ENCODE measurements at regions of chr18 and their contacts with region 1.

Region 1: GRCh38 chr18:42114310-42114943 is 159.4 kb downstream of the PIK3C3 start:
- DNase-seq: peak; percentile 42
- ATAC-seq: peak; percentile 96
- H3K4me3 ChIP-seq: no peak overlapping the region
- H3K27ac ChIP-seq: no peak overlapping the region; the same call in 1 of the 2 replicates
- H3K4me1 ChIP-seq: peaks cover 11% of the 10 kb centered on the region
- H3K27me3 ChIP-seq: no peaks in the 10 kb centered on the region
- CTCF ChIP-seq: peak; percentile 77 to 93 (median 84)
- EP300 ChIP-seq: no peak
- POLR2A ChIP-seq: no peak
- RAD21 ChIP-seq: peak; percentile 99

Region 2: DNA sequence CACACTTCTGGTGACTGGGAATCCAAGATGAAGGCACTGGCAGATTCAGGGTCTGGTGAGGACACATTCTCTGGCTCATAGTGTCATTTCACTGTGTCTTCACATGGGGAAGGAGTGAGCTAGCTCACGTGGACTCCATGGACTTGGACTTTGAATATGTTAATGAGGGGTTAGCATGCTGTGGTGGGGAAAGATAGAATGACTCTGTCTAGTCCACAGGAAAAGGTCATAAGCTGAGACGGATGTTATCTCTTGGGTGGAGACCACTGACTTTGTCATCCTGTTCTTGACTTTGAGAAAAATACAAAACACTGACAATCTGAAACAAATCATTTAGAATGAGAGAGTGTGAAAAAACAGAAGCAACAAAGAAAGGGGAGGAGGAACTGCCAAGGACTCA is 13.5 kb before region 1 on chr18:
- CTCF ChIA-PET with region 1: interaction called, 10 read pairs
- POLR2A ChIA-PET with region 1: interaction called, 3 read pairs
- RAD21 ChIA-PET with region 1: interaction called, 8 read pairs
- SMC1A ChIA-PET with region 1: interaction called, 28 read pairs
- in situ Hi-C with region 1: no loop called
- intact Hi-C with region 1: no loop called
- DNase-seq: no peak
- ATAC-seq: no peak; the same call in 2 of the 3 replicates
- H3K4me3 ChIP-seq: no peak overlapping the region
- H3K27ac ChIP-seq: no peak overlapping the region
- H3K4me1 ChIP-seq: no peaks in the 10 kb centered on the region
- H3K27me3 ChIP-seq: no peaks in the 10 kb centered on the region
- CTCF ChIP-seq: no peak
- EP300 ChIP-seq: no peak
- POLR2A ChIP-seq: no peak
- RAD21 ChIP-seq: no peak

Region 3: GRCh38 chr18:42174909-42175308 is 60.5 kb after region 1 on chr18:
- CTCF ChIA-PET with region 1: interaction called, 7 read pairs
- POLR2A ChIA-PET with region 1: no interaction called
- RAD21 ChIA-PET with region 1: interaction called, 10 read pairs
- SMC1A ChIA-PET with region 1: interaction called, 10 read pairs
- in situ Hi-C with region 1: no loop called
- intact Hi-C with region 1: no loop called
- DNase-seq: no peak
- ATAC-seq: peak; percentile 54
- H3K4me3 ChIP-seq: no peak overlapping the region
- H3K27ac ChIP-seq: no peak overlapping the region
- H3K4me1 ChIP-seq: no peaks in the 10 kb centered on the region
- H3K27me3 ChIP-seq: no peaks in the 10 kb centered on the region; a peak in 1 of 4 replicates
- CTCF ChIP-seq: no peak
- EP300 ChIP-seq: no peak
- POLR2A ChIP-seq: no peak
- RAD21 ChIP-seq: no peak

Region 4: DNA sequence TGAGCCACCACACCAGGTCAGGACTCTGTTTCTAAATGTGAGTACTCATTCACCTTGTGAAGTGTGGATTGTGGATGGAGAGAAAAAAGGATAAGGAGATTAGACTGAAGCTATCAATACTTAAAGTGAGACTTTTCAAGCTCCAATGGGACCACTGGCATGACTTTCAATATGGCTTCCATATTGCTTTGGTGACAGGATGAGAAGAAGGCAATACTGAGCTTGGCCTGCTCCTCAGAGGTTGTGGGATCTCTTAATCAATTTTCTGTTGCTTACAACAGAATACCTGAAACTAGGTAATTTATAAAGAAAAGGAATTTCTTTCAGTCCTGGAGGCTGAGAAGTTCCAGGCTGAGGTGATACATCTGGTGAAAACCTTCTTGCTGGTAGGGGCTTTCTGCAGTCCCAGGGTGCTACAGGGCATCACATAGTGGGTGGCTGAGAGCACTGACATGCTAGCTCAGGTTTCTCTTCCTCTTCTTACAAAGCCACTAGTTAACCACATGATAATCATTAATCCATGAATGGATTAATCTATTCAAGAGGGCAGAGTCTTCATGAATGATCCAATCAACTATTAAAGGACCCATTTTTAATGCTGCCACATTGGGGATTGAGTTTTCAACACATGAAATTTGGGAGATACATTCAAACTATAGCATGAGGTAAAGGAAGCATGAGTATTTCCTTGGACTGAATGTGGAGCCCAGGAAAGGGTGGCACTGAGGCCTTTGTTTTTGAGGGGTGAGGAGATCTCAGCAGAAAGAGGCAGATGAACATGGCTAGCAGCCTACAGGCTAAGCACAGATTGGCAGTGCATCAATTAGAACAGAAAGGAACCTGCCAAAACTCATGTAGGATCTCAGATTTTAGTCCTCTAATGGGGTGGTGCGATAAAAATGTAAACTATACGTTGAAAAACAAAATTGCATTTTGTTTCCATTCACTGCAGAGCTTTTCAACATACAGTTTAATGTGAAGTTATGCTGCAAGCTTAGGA is 115.1 kb after region 1 on chr18:
- CTCF ChIA-PET with region 1: interaction called, 16 read pairs
- POLR2A ChIA-PET with region 1: no interaction called
- RAD21 ChIA-PET with region 1: interaction called, 19 read pairs
- SMC1A ChIA-PET with region 1: interaction called, 18 read pairs
- in situ Hi-C with region 1: no loop called
- intact Hi-C with region 1: no loop called
- DNase-seq: peak; percentile 63
- ATAC-seq: peak; percentile 98
- H3K4me3 ChIP-seq: no peak overlapping the region
- H3K27ac ChIP-seq: no peak overlapping the region
- H3K4me1 ChIP-seq: no peaks in the 10 kb centered on the region
- H3K27me3 ChIP-seq: no peaks in the 10 kb centered on the region
- CTCF ChIP-seq: no peak
- EP300 ChIP-seq: peak; percentile 76 to 86; a peak in 3 of 4 replicates
- POLR2A ChIP-seq: no peak
- RAD21 ChIP-seq: no peak

Region 5: GRCh38 chr18:42281124-42281523 is 166.7 kb after region 1 on chr18:
- CTCF ChIA-PET with region 1: interaction called, 204 read pairs
- POLR2A ChIA-PET with region 1: interaction called, 4 read pairs
- RAD21 ChIA-PET with region 1: interaction called, 115 read pairs
- SMC1A ChIA-PET with region 1: interaction called, 191 read pairs
- in situ Hi-C with region 1: no loop called
- intact Hi-C with region 1: no loop called
- DNase-seq: no peak
- ATAC-seq: peak; percentile 68
- H3K4me3 ChIP-seq: no peak overlapping the region
- H3K27ac ChIP-seq: no peak overlapping the region
- H3K4me1 ChIP-seq: no peaks in the 10 kb centered on the region
- H3K27me3 ChIP-seq: no peaks in the 10 kb centered on the region
- CTCF ChIP-seq: no peak
- EP300 ChIP-seq: no peak
- POLR2A ChIP-seq: no peak
- RAD21 ChIP-seq: no peak

Region 6: DNA sequence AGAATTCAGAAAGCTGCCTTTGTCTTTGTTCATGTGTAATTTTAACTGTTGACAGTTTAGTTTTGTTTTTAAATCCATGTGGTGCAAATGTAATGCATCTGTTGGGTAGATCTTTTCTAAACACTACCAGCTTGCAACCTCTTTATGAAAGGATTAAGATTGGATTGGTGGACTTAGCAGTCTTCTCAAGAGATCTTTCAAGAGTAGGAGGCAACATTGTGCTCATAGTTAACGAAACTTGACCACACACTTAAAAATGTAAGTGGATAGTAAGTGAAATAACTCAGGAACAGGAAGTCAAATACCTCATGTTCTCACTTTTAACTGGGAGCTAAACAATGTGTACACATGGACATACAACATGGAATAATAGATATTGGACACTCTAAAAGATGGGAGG is 422.0 kb after region 1 on chr18:
- CTCF ChIA-PET with region 1: no interaction called
- POLR2A ChIA-PET with region 1: no interaction called
- RAD21 ChIA-PET with region 1: no interaction called
- SMC1A ChIA-PET with region 1: no interaction called
- in situ Hi-C with region 1: no loop called
- intact Hi-C with region 1: no loop called
- DNase-seq: no peak
- ATAC-seq: no peak
- H3K4me3 ChIP-seq: no peak overlapping the region
- H3K27ac ChIP-seq: no peak overlapping the region
- H3K4me1 ChIP-seq: no peaks in the 10 kb centered on the region
- H3K27me3 ChIP-seq: no peaks in the 10 kb centered on the region
- CTCF ChIP-seq: no peak
- EP300 ChIP-seq: no peak
- POLR2A ChIP-seq: no peak
- RAD21 ChIP-seq: no peak

Region 7: DNA sequence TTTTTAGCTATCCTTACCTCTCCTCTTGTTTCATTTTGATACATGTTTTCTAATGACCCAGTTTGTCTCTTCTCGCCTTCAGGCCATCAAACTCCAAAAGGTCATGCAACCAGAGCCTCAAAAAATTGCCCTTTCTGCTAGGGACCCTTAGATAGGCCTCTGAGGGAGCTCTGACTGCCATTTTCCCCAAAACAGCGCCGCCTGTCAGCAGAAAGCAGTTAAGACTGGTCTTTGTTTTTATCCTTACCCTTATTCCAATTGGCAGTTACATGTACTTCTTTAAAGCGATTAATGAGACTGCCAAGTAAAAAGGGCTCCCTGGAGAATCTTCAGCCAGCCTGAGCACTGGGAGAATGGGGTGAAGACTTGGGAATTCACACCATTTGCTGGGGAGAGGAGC is 1056.2 kb after region 1 on chr18:
- CTCF ChIA-PET with region 1: interaction called, 12 read pairs
- POLR2A ChIA-PET with region 1: no interaction called
- RAD21 ChIA-PET with region 1: no interaction called
- SMC1A ChIA-PET with region 1: no interaction called
- in situ Hi-C with region 1: no loop called
- intact Hi-C with region 1: no loop called
- DNase-seq: no peak
- ATAC-seq: no peak
- H3K4me3 ChIP-seq: no peak overlapping the region
- H3K27ac ChIP-seq: no peak overlapping the region
- H3K4me1 ChIP-seq: no peaks in the 10 kb centered on the region
- H3K27me3 ChIP-seq: no peaks in the 10 kb centered on the region
- CTCF ChIP-seq: peak in 2 of 3 experiments; percentile 1 to 12; a peak in 1 of 6 replicates
- EP300 ChIP-seq: no peak
- POLR2A ChIP-seq: no peak
- RAD21 ChIP-seq: no peak

Region 8: DNA sequence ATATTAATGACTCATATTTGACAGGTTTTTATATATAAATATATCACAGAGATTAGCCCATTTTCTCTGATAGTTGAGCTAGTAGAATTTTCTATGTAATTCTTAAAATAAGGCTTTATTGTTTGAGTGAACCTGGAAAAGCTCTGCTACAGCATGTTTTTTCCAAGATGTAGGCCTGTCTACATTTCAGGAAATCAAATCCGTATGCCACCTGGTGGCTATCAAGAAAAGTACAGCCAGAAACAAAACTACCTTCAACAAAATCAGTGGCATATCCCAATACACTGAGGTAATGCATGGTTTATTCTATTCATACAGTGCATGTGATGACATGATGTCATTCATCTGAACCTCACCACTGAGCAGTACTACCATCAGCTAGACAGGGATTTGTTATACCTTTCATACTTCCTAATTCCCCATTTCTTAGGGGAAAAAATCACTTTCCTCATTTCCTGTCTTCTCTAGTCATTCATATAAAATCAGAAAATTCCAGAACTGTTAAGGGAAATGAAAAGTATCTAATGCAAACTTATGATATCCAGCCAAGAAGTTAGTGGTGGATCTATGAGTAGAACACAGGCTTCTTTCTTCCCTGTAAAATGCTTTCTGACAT is 1473.2 kb after region 1 on chr18:
- CTCF ChIA-PET with region 1: interaction called, 3 read pairs
- POLR2A ChIA-PET with region 1: no interaction called
- RAD21 ChIA-PET with region 1: interaction called, 3 read pairs
- SMC1A ChIA-PET with region 1: no interaction called
- in situ Hi-C with region 1: no loop called
- intact Hi-C with region 1: loop called (anchors 10 kb)
- DNase-seq: no peak
- ATAC-seq: peak; percentile 67
- H3K4me3 ChIP-seq: no peak overlapping the region
- H3K27ac ChIP-seq: no peak overlapping the region
- H3K4me1 ChIP-seq: no peaks in the 10 kb centered on the region
- H3K27me3 ChIP-seq: no peaks in the 10 kb centered on the region
- CTCF ChIP-seq: peak; percentile 51 to 65 (median 59)
- EP300 ChIP-seq: no peak
- POLR2A ChIP-seq: no peak
- RAD21 ChIP-seq: peak; percentile 53

Measured in GM12878 (cell line).